Right ventricle myocardium inferior (tissue), 1 donor: ENCODE measurements at regions of chr16 and their contacts with region 1.

Region 1: DNA sequence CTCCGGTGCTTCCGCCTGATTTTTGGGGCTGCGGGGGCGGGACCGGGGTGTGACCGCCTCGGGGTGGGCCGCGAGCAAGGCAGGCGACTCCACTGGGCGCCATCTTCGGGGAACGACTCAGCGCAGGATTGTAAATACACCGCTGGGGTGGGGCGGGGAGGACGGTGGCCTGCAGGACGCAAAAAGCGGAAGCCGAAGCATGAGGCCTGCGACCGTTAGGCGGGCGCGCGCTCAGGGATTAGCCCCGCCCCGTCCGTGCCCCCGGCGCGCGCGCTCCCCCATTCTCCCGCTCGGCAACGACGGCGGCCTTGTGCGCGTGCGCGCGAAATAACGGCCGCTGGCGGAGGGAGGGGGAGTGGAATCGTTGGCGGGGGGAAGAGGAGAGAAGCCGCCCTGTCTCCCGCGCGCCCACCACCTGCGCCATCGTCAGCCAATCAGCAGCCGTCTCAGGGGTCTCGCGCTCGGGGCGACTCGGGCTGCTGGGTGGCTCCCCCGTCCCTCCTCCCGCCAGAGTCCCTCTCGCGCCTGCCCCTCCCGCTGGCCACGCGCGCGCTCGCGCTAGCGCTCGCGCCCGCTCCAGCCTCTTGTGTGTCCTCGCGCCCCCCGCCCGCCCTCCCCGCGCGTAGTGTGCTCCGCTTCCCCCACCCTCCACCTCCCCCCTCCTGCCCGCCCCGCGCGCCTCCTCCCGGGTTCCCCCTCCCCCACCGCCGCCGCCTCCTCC is 791 bp upstream of the MAZ start:
- DNase-seq: peak; percentile 99
- ATAC-seq: peak; percentile 87

Region 2: DNA sequence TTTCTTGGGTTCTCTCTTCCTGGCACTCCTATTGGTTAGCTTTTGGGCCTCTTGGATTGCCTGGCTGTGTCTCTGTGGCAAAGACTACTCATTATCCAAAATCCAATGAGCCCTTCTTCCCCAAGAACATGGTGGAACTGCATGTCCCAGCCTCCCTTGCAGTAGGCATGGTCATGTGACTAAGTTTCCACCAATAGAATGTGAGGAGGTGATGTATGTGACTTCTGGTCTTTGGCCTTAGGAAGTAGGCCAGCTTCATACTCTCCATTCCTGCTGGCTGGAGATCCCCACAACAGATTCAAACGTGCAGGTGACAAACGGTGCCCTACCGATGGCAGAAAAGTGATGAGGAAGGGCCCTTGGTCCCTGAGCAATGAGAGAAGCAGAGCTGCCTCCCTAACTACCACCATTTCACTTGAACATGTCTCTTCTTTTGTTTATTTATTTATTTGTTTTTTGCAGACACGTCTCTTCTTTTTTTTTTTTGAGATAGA is 159.8 kb before region 1 on chr16:
- intact Hi-C with region 1: no loop called
- DNase-seq: no peak
- ATAC-seq: no peak

Region 3: GRCh38 chr16:29790183-29790952 is 15.2 kb before region 1 on chr16 and contains the start of gene KIF22:
- intact Hi-C with region 1: loop called (anchors 2 kb)
- DNase-seq: peak; percentile 100
- ATAC-seq: peak; percentile 99
- total RNA-seq, gene KIF22: 53.3 TPM

Region 4: DNA sequence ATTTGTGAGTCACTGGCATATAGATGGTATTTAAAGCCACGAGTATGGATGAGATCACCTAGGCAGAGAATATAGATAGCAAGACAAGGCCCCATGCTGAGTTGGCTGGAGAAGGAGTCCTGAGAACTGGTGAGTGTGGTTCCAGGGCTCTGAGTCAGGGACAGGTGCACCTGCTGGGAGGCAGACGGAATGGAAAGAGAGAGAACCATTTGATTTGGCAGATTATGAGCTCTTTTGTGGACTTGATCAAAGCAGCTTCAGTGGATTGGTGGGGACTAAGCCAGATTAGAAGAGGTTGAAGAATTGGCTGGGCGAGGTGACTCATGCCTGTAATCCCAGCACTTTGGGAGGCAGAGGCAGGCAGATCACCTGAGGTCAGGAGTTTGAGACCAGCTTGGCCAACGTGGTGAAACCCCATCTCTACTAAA is 213.2 kb after region 1 on chr16:
- intact Hi-C with region 1: no loop called
- DNase-seq: no peak
- ATAC-seq: no peak

Region 5: GRCh38 chr16:30065143-30065850 is 259.8 kb after region 1 on chr16 and contains the start of gene ALDOA:
- intact Hi-C with region 1: loop called (anchors 5 kb)
- DNase-seq: peak; percentile 99
- ATAC-seq: peak; percentile 91
- total RNA-seq, gene ALDOA: 4,126 TPM

Region 6: GRCh38 chr16:30893744-30894539 is 1088.4 kb after region 1 on chr16 and contains the start of gene BCL7C:
- intact Hi-C with region 1: loop called (anchors 10 kb)
- DNase-seq: peak; percentile 97
- ATAC-seq: peak; percentile 88
- total RNA-seq, gene BCL7C: 32.2 TPM